CD8-positive, alpha-beta T cell (primary cell): ENCODE measurements at regions of chr7 and their contacts with region 1.

Region 1: GRCh38 chr7:13021566-13022300 is 334.3 kb downstream of the ARL4A start:
- DNase-seq: no peak
- ATAC-seq: no peak
- H3K4me3 ChIP-seq: no peak overlapping the region
- H3K4me3 Mint-ChIP-seq: no peak overlapping the region
- H3K27ac ChIP-seq: no peak overlapping the region
- H3K27ac Mint-ChIP-seq: no peak overlapping the region
- H3K4me1 ChIP-seq: no peaks in the 10 kb centered on the region
- H3K4me1 Mint-ChIP-seq: no peaks in the 10 kb centered on the region
- H3K27me3 ChIP-seq: no peaks in the 10 kb centered on the region
- H3K27me3 Mint-ChIP-seq: no peaks in the 10 kb centered on the region
- CTCF ChIP-seq: no peak

Region 2: DNA sequence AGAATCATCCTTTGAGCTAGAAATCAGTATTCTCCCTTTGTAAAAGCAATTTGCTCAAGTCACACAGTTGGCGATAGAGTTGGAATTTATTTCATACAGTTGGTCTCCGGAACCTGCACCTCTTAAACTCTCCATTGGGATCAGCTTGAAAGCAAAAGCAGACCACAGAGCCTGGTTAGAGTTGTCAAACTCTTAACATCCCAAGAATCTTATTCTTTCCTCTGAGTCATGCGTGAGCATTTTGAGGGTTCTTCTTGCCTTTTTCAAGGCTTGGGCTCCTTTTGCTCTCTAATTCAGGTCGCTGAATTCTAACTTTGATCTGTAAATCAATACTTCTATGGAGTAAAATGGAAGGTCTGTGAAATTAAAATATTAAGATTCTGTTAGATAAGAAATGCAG is 470.8 kb before region 1 on chr7:
- CTCF ChIA-PET with region 1: no interaction called
- POLR2A ChIA-PET with region 1: no interaction called
- intact Hi-C with region 1: loop called in 1 of 2 experiments (anchors 2 kb)
- DNase-seq: no peak
- ATAC-seq: no peak
- H3K4me3 ChIP-seq: no peak overlapping the region
- H3K4me3 Mint-ChIP-seq: no peak overlapping the region
- H3K27ac ChIP-seq: no peak overlapping the region
- H3K27ac Mint-ChIP-seq: no peak overlapping the region
- H3K4me1 ChIP-seq: no peaks in the 10 kb centered on the region
- H3K4me1 Mint-ChIP-seq: no peaks in the 10 kb centered on the region
- H3K27me3 ChIP-seq: no peaks in the 10 kb centered on the region
- H3K27me3 Mint-ChIP-seq: peaks cover 2% of the 10 kb centered on the region
- CTCF ChIP-seq: no peak

Region 3: GRCh38 chr7:13104128-13104527 is 82.4 kb after region 1 on chr7:
- CTCF ChIA-PET with region 1: no interaction called
- POLR2A ChIA-PET with region 1: no interaction called
- intact Hi-C with region 1: no loop called
- DNase-seq: no peak
- ATAC-seq: no peak
- H3K4me3 ChIP-seq: no peak overlapping the region
- H3K4me3 Mint-ChIP-seq: no peak overlapping the region
- H3K27ac ChIP-seq: no peak overlapping the region
- H3K27ac Mint-ChIP-seq: no peak overlapping the region
- H3K4me1 ChIP-seq: no peaks in the 10 kb centered on the region
- H3K4me1 Mint-ChIP-seq: no peaks in the 10 kb centered on the region
- H3K27me3 ChIP-seq: no peaks in the 10 kb centered on the region
- H3K27me3 Mint-ChIP-seq: peaks cover 2% of the 10 kb centered on the region
- CTCF ChIP-seq: no peak